ENCODE measurements at regions of chr13 and their contacts with region 1.

Region 1: GRCh38 chr13:96511587-96511986 is 421.7 kb downstream of the HS6ST3 start:
- DNase-seq: no peak
- H3K4me3 ChIP-seq: no peak overlapping the region
- H3K27ac ChIP-seq: no peak overlapping the region
- H3K4me1 ChIP-seq: no peaks in the 10 kb centered on the region
- H3K27me3 ChIP-seq: no peaks in the 10 kb centered on the region
- CTCF ChIP-seq: no peak
- POLR2A ChIP-seq: no peak

Region 2: DNA sequence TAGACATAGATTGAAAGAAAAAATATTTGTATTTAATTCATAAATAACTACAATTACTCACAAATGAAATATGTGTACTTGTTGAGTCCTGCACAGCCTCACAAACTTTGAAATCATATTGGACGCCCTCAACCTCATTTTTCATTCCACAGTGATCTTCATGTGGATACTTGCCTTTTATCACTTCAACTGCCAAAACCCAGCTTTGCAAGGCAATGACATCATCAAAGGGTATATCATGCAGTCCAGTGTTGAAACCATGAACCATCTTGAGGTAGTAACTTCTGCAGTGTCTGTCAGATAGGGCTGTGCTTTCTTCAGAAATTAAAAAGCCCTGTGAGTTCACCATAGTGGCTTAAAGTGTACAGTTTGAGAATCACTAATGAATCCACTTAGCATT is 339.5 kb before region 1 on chr13:
- CTCF ChIA-PET with region 1: no interaction called
- POLR2A ChIA-PET with region 1: no interaction called
- dilution Hi-C with region 1: no loop called
- intact Hi-C with region 1: no loop called
- DNase-seq: no peak
- H3K4me3 ChIP-seq: no peak overlapping the region
- H3K27ac ChIP-seq: no peak overlapping the region
- H3K4me1 ChIP-seq: no peaks in the 10 kb centered on the region
- H3K27me3 ChIP-seq: no peaks in the 10 kb centered on the region
- CTCF ChIP-seq: no peak
- POLR2A ChIP-seq: no peak

Region 3: GRCh38 chr13:96492766-96493165 is 18.8 kb before region 1 on chr13:
- CTCF ChIA-PET with region 1: no interaction called
- POLR2A ChIA-PET with region 1: no interaction called
- dilution Hi-C with region 1: no loop called
- intact Hi-C with region 1: loop called (anchors 1 kb)
- DNase-seq: no peak
- H3K4me3 ChIP-seq: no peak overlapping the region
- H3K27ac ChIP-seq: no peak overlapping the region
- H3K4me1 ChIP-seq: no peaks in the 10 kb centered on the region
- H3K27me3 ChIP-seq: no peaks in the 10 kb centered on the region
- CTCF ChIP-seq: no peak
- POLR2A ChIP-seq: no peak

Measured in endothelial cell of umbilical vein (primary cell).